ENCODE measurements at regions of chr11 and their contacts with region 1.

Region 1: GRCh38 chr11:94183886-94184264 is 55.2 kb downstream of the PANX1 start:
- DNase-seq: peak in 1 of 2 donors; percentile 31
- H3K4me3 ChIP-seq: no peak overlapping the region
- H3K27ac ChIP-seq: no peak overlapping the region
- H3K4me1 ChIP-seq: peaks cover 0 to 17% (median 3%) of the 10 kb centered on the region in 4 donors
- H3K27me3 ChIP-seq: no peaks in the 10 kb centered on the region
- CTCF ChIP-seq: peak; percentile 58 to 64

Region 2: GRCh38 chr11:94151903-94152677 is 31.8 kb before region 1 on chr11:
- intact Hi-C with region 1: loop called (anchors 5 kb)
- DNase-seq: peak; percentile 35 to 68
- H3K4me3 ChIP-seq: no peak overlapping the region
- H3K27ac ChIP-seq: peak overlapping the region; percentile 42 to 50
- H3K4me1 ChIP-seq: peaks cover 0 to 57% (median 32%) of the 10 kb centered on the region in 4 donors
- H3K27me3 ChIP-seq: no peaks in the 10 kb centered on the region
- CTCF ChIP-seq: no peak

Region 3: GRCh38 chr11:94400839-94401772 is 217.2 kb after region 1 on chr11 and contains the start of gene GPR83:
- intact Hi-C with region 1: loop called (anchors 10 kb)
- DNase-seq: no peak
- H3K4me3 ChIP-seq: peak within 1 kb of the TSS; percentile 10 to 23
- H3K27ac ChIP-seq: no peak within 1 kb of the TSS
- H3K4me1 ChIP-seq: peaks cover 0 to 10% (median 5%) of the 10 kb centered on the region in 4 donors
- H3K27me3 ChIP-seq: peaks cover 0 to 29% of the 10 kb centered on the region in 2 donors
- CTCF ChIP-seq: no peak